Endothelial cell of umbilical vein (primary cell): ENCODE measurements at regions of chr7 and their contacts with region 1.

Region 1: GRCh38 chr7:41705109-41705901 is 2.4 kb upstream of the INHBA start:
- DNase-seq: peak; percentile 94
- H3K4me3 ChIP-seq: peak overlapping the region; percentile 6 to 58 (median 36)
- H3K27ac ChIP-seq: peak overlapping the region; percentile 56
- H3K4me1 ChIP-seq: peaks cover 18% of the 10 kb centered on the region
- H3K27me3 ChIP-seq: no peaks in the 10 kb centered on the region
- CTCF ChIP-seq: peak; percentile 85 to 93
- POLR2A ChIP-seq: no peak

Region 2: DNA sequence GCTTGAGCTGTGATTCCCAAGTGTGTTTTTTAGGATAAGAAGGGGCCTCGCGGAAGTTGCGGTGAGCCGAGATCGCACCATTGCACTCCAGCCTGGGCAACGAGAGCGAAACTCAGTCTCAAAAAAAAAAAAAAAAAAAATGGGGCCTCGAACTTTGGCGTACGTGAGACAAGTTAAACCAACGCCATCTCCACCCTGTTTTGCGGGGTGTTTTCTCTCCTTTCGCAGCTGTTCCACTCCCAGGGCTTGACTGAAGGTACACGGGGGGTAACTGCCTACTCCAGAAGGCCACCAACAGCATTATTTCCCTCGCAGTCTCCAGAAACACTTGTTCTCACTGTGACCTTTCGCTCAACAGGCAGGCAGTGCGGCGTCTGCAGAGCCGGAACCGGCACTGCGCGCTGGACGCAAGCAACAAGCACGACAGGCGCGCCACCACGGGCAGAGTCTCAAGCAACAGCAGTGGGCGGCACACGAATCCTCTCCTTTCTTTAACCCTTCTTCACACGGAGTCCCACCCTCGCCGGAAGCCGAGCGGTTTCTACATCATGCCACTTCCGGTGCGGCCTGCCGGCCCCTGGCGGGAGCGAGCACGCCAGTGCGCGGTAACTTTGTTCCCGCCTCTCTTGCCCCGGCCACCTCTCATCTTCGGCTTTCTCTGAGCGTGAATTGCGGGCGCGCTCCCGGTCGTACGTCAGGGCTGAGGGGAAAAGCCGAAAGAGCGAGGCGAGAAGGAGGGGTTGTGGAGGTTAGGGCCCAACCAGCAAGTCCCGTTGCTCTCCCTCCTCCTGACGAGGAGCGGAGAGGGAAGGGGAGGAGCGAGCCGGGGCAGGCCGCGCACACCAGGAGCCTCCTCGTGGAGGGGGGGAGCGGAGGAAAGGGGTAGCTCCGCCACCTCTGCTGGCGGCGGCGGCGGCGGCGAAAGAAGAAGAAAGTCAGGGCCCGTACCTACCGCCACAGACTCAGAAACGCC is 1756.1 kb before region 1 on chr7:
- CTCF ChIA-PET with region 1: no interaction called
- POLR2A ChIA-PET with region 1: no interaction called
- dilution Hi-C with region 1: no loop called
- intact Hi-C with region 1: loop called (anchors 10 kb)
- DNase-seq: peak; percentile 100
- H3K4me3 ChIP-seq: peak overlapping the region; percentile 0 to 76 (median 73)
- H3K27ac ChIP-seq: peak overlapping the region; percentile 81
- H3K4me1 ChIP-seq: peaks cover 19% of the 10 kb centered on the region
- H3K27me3 ChIP-seq: no peaks in the 10 kb centered on the region
- CTCF ChIP-seq: no peak
- POLR2A ChIP-seq: peak; percentile 95

Region 3: DNA sequence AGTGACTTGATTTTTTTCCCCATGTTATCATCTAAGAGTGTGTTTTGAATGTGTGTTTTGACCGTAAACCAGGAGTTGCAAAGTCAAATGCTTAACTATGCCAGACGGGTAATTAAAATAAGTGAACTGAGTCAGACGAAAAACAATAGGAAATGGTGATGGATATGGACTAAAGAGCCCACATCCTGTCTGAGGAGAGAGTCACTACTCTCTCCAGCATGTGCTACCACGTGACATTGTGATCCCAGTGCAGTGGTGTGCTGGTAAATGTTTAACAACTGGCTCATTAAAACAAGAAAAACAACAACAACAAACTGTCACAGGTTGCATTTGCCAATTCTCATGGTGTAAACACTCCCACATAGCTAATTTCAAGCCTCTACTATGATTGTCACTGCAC is 1406.2 kb before region 1 on chr7:
- CTCF ChIA-PET with region 1: interaction called, 3 read pairs
- POLR2A ChIA-PET with region 1: no interaction called
- dilution Hi-C with region 1: no loop called
- intact Hi-C with region 1: loop called (anchors 2 kb)
- DNase-seq: peak; percentile 97
- H3K4me3 ChIP-seq: no peak overlapping the region
- H3K27ac ChIP-seq: peak overlapping the region; percentile 98
- H3K4me1 ChIP-seq: peaks cover 48% of the 10 kb centered on the region
- H3K27me3 ChIP-seq: no peaks in the 10 kb centered on the region
- CTCF ChIP-seq: no peak
- POLR2A ChIP-seq: no peak

Region 4: GRCh38 chr7:40507166-40507565 is 1198.1 kb before region 1 on chr7:
- CTCF ChIA-PET with region 1: interaction called, 7 read pairs
- POLR2A ChIA-PET with region 1: no interaction called
- dilution Hi-C with region 1: no loop called
- intact Hi-C with region 1: loop called (anchors 1 kb)
- DNase-seq: no peak
- H3K4me3 ChIP-seq: no peak overlapping the region
- H3K27ac ChIP-seq: no peak overlapping the region
- H3K4me1 ChIP-seq: no peaks in the 10 kb centered on the region
- H3K27me3 ChIP-seq: no peaks in the 10 kb centered on the region
- CTCF ChIP-seq: peak in 1 of 2 donors; percentile 19
- POLR2A ChIP-seq: no peak

Region 5: GRCh38 chr7:40833888-40834234 is 871.4 kb before region 1 on chr7:
- CTCF ChIA-PET with region 1: interaction called, 6 read pairs
- POLR2A ChIA-PET with region 1: no interaction called
- dilution Hi-C with region 1: no loop called
- intact Hi-C with region 1: loop called (anchors 1 kb)
- DNase-seq: peak; percentile 20
- H3K4me3 ChIP-seq: no peak overlapping the region
- H3K27ac ChIP-seq: no peak overlapping the region
- H3K4me1 ChIP-seq: no peaks in the 10 kb centered on the region
- H3K27me3 ChIP-seq: no peaks in the 10 kb centered on the region
- CTCF ChIP-seq: peak in 1 of 2 donors; percentile 11
- POLR2A ChIP-seq: no peak

Region 6: GRCh38 chr7:41003031-41003925 is 702.0 kb before region 1 on chr7:
- CTCF ChIA-PET with region 1: interaction called, 87 read pairs
- POLR2A ChIA-PET with region 1: no interaction called
- dilution Hi-C with region 1: no loop called
- intact Hi-C with region 1: loop called (anchors 1 kb)
- DNase-seq: peak; percentile 80
- H3K4me3 ChIP-seq: no peak overlapping the region
- H3K27ac ChIP-seq: no peak overlapping the region
- H3K4me1 ChIP-seq: no peaks in the 10 kb centered on the region
- H3K27me3 ChIP-seq: no peaks in the 10 kb centered on the region
- CTCF ChIP-seq: peak; percentile 73 to 77
- POLR2A ChIP-seq: no peak

Region 7: GRCh38 chr7:41045556-41046123 is 659.7 kb before region 1 on chr7:
- CTCF ChIA-PET with region 1: interaction called, 21 read pairs
- POLR2A ChIA-PET with region 1: no interaction called
- dilution Hi-C with region 1: no loop called
- intact Hi-C with region 1: loop called (anchors 2 kb)
- DNase-seq: peak; percentile 18
- H3K4me3 ChIP-seq: no peak overlapping the region
- H3K27ac ChIP-seq: no peak overlapping the region
- H3K4me1 ChIP-seq: no peaks in the 10 kb centered on the region
- H3K27me3 ChIP-seq: no peaks in the 10 kb centered on the region
- CTCF ChIP-seq: peak in 1 of 2 donors; percentile 23
- POLR2A ChIP-seq: no peak